WTC11 (cell line): ENCODE measurements at regions of chr6 and their contacts with region 1.

Region 1: DNA sequence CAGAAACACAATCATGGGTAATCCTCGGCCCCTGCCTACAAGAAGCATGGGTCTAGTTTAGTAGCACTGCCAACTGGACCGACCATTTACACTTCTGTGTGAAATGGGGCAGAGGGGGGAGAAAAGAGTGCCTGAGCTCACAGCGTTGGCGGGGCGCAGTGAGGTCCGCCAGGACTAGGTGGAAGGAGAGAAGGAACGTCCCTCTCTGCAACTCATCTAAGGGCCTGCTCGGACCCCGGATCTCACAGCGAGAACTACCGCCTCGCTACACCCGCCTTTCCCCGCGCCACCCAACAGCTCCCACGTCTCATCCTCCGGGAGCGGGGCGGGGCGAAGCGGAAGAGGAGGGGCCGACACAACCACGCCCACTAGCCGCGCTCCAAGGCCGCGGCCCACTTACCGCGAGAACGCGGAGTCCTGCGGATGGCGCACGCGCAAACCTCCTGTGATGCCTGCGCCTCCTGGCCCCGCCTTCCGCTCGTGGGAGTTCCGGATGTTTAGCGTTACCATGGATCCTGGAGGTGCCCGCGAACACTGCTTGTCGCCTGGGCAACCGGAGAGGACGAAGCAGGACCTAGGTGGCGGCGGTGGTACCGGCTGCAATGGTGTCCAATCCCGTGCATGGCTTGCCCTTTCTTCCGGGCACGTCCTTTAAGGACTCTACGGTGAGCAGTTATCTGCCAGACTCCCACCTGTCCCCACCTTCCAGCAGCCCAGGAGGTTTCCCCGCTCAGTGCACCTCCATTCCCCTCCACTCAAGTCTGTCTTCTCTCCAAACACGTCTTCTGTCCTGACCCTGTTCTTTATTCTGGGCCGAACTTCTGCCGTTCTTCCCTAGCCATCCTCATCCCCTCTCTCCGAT is at the start of gene EFHC1:
- DNase-seq: peak; percentile 97
- ATAC-seq: peak; percentile 85
- H3K4me3 Mint-ChIP-seq: no peak within 1 kb of the TSS
- H3K27ac Mint-ChIP-seq: peak within 1 kb of the TSS; percentile 96
- H3K4me1 Mint-ChIP-seq: peaks cover 17% of the 10 kb centered on the region
- H3K27me3 Mint-ChIP-seq: no peaks in the 10 kb centered on the region
- CTCF ChIP-seq: no peak
- total RNA-seq, gene EFHC1: 13.4 to 19.2 TPM (median 15.5 TPM) in 3 replicates

Region 2: GRCh38 chr6:52407467-52407866 is 12.6 kb before region 1 on chr6:
- CTCF ChIA-PET with region 1: interaction called, 19 read pairs
- POLR2A ChIA-PET with region 1: no interaction called
- DNase-seq: no peak
- ATAC-seq: peak; percentile 78
- H3K4me3 Mint-ChIP-seq: no peak overlapping the region
- H3K27ac Mint-ChIP-seq: no peak overlapping the region
- H3K4me1 Mint-ChIP-seq: no peaks in the 10 kb centered on the region
- H3K27me3 Mint-ChIP-seq: no peaks in the 10 kb centered on the region
- CTCF ChIP-seq: no peak; the same call in 1 of the 2 replicates

Region 3: DNA sequence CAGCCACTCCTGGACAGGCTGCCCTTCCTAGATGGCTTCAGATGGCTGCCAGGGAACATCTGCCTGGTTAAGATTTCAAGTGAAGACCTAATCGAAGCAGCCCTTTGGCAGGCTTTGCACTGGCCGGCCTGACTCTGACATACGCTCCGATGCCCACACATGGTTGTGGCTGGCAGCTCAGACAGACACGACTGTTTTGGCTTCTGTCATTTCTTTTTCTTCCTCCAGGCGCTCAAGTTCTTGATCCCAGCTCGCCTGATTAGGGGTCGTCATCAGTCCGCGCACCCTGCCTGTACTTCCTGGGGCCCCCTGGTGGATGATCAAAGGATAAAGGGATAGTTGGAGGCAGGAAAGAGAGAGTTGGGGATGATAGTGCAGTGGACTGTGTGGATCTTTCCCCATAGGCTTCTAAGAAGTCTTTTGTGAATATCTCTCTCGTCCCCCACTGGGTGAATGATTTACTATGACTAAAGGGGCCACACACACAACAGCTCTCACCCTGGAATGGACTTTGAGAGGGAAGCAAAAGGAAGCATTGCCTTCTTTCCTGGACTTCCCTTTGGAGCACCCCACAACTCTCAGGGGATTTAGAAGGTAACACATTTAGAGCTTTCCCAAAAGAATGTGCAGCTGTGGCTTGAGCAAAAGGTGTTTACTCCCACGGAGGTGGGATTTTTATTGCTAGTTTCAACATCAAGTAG is 178.2 kb after region 1 on chr6:
- CTCF ChIA-PET with region 1: interaction called, 17 read pairs
- POLR2A ChIA-PET with region 1: no interaction called
- DNase-seq: peak; percentile 86
- ATAC-seq: peak; percentile 82
- H3K4me3 Mint-ChIP-seq: peak overlapping the region; percentile 43
- H3K27ac Mint-ChIP-seq: peak overlapping the region; percentile 34; the same call in 1 of the 2 replicates
- H3K4me1 Mint-ChIP-seq: peaks cover 22% of the 10 kb centered on the region
- H3K27me3 Mint-ChIP-seq: no peaks in the 10 kb centered on the region; the same call in 1 of the 2 replicates
- CTCF ChIP-seq: 0 out of 2 replicates have a peak, but pooled peaks have one; percentile 55

Region 4: GRCh38 chr6:52650941-52651340 is 230.9 kb after region 1 on chr6:
- CTCF ChIA-PET with region 1: interaction called, 14 read pairs
- POLR2A ChIA-PET with region 1: no interaction called
- DNase-seq: no peak
- ATAC-seq: no peak
- H3K4me3 Mint-ChIP-seq: no peak overlapping the region
- H3K27ac Mint-ChIP-seq: no peak overlapping the region
- H3K4me1 Mint-ChIP-seq: peaks cover 22% of the 10 kb centered on the region
- H3K27me3 Mint-ChIP-seq: no peaks in the 10 kb centered on the region
- CTCF ChIP-seq: no peak

Region 5: GRCh38 chr6:52663120-52663935 is 243.3 kb after region 1 on chr6:
- CTCF ChIA-PET with region 1: interaction called, 20 read pairs
- POLR2A ChIA-PET with region 1: no interaction called
- DNase-seq: peak; percentile 42
- ATAC-seq: no peak
- H3K4me3 Mint-ChIP-seq: no peak overlapping the region
- H3K27ac Mint-ChIP-seq: no peak overlapping the region
- H3K4me1 Mint-ChIP-seq: no peaks in the 10 kb centered on the region
- H3K27me3 Mint-ChIP-seq: peaks cover 3% of the 10 kb centered on the region; the same call in 1 of the 2 replicates
- CTCF ChIP-seq: peak; percentile 71

Region 6: DNA sequence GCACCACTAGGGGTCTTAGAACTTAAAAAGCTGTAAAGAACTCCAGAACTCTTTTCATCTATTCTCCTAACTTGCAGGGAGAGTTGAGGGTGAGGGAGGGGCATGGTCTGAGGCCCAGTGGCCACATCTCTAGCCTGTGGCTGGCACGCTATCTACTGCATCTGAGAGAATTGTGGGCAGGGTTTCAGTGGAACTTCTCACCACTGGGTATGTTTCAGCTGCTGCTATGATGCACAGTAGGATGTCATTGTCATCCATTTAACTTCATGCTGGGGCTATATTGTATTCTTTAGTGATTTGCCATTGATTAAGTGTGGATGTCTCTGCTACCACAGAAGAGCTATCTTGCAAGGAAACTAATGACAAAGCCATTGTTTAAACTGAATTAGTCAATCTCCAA is 255.3 kb after region 1 on chr6:
- CTCF ChIA-PET with region 1: interaction called, 10 read pairs
- POLR2A ChIA-PET with region 1: no interaction called
- DNase-seq: no peak
- ATAC-seq: peak; percentile 4; the same call in 1 of the 2 replicates
- H3K4me3 Mint-ChIP-seq: no peak overlapping the region
- H3K27ac Mint-ChIP-seq: no peak overlapping the region
- H3K4me1 Mint-ChIP-seq: peaks cover 25% of the 10 kb centered on the region
- H3K27me3 Mint-ChIP-seq: peaks cover 8% of the 10 kb centered on the region
- CTCF ChIP-seq: no peak